CD8-positive, alpha-beta T cell (primary cell): ENCODE measurements at regions of chr18 and their contacts with region 1.

Region 1: DNA sequence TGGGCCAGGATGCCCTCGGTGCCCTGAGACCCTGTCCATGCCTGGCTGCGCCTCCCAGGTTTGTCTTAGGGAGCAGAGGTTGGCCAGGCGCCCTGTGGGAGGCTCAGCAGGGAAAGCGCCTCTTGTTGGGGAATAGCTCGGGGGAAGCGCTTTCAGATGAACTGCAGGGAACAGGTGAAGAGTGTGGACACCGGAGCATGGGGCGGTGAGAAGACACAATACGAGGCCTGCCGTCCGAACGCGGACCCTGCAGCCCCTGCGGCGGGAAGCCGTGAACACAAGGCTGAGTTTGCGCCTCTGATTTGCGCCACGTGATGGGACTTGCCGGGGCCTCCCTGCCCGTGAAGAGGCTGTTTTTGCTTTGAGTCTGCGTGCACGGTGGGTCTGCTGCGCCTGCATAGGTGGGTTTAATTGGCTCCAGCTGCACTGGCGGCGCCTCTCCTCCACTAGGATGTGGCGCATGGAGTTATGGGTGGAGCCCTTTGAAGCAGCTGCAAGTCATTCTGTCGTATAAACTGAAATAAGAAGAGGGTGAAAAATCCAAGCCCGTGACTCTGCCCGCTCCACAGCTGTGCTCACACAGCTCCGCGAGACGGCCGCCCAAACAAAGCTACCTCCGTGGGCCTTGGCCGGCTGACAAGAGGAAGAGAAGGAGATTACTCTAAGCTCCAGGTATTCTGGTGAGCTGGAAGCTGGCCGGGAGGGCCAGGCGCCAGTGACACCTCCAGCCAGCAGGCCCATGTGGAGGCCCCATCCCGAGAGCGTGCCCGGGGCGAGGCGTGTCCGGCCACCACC is 103.5 kb upstream of the CTDP1 start:
- DNase-seq: no peak
- ATAC-seq: no peak
- H3K4me3 ChIP-seq: no peak overlapping the region
- H3K4me3 Mint-ChIP-seq: no peak overlapping the region
- H3K27ac ChIP-seq: no peak overlapping the region
- H3K27ac Mint-ChIP-seq: no peak overlapping the region
- H3K4me1 ChIP-seq: peaks cover 27% of the 10 kb centered on the region
- H3K4me1 Mint-ChIP-seq: peaks cover 21% of the 10 kb centered on the region
- H3K27me3 ChIP-seq: no peaks in the 10 kb centered on the region
- H3K27me3 Mint-ChIP-seq: no peaks in the 10 kb centered on the region
- CTCF ChIP-seq: no peak

Region 2: GRCh38 chr18:79507076-79507545 is 69.0 kb before region 1 on chr18:
- CTCF ChIA-PET with region 1: no interaction called
- POLR2A ChIA-PET with region 1: interaction called, 3 read pairs
- intact Hi-C with region 1: loop called in 1 of 2 experiments (anchors 2 kb)
- DNase-seq: peak in 3 of 9 experiments; percentile 40 to 45 (median 42)
- ATAC-seq: peak; percentile 55
- H3K4me3 ChIP-seq: peak overlapping the region; percentile 31 to 36
- H3K4me3 Mint-ChIP-seq: peak overlapping the region; percentile 73
- H3K27ac ChIP-seq: peak overlapping the region; percentile 24 to 43
- H3K27ac Mint-ChIP-seq: peak overlapping the region; percentile 92
- H3K4me1 ChIP-seq: peaks cover 29% of the 10 kb centered on the region
- H3K4me1 Mint-ChIP-seq: peaks cover 52% of the 10 kb centered on the region
- H3K27me3 ChIP-seq: no peaks in the 10 kb centered on the region
- H3K27me3 Mint-ChIP-seq: no peaks in the 10 kb centered on the region
- CTCF ChIP-seq: no peak